ENCODE measurements at regions of chr4 and their contacts with region 1.

Region 1: GRCh38 chr4:102826890-102827673 is at the start of gene UBE2D3:
- DNase-seq: peak; percentile 99
- ATAC-seq: peak; percentile 48
- H3K4me3 ChIP-seq: peak within 1 kb of the TSS; percentile 96 to 100 (median 98)
- H3K4me3 Mint-ChIP-seq: no peak within 1 kb of the TSS
- H3K27ac ChIP-seq: peak within 1 kb of the TSS; percentile 100
- H3K27ac Mint-ChIP-seq: no peak within 1 kb of the TSS
- H3K4me1 ChIP-seq: peaks cover 33 to 34% of the 10 kb centered on the region in 2 donors
- H3K4me1 Mint-ChIP-seq: peaks cover 38% of the 10 kb centered on the region
- H3K27me3 ChIP-seq: no peaks in the 10 kb centered on the region
- H3K27me3 Mint-ChIP-seq: no peaks in the 10 kb centered on the region
- CTCF ChIP-seq: no peak
- total RNA-seq, gene UBE2D3: 261 and 264 TPM in 2 replicates

Region 2: DNA sequence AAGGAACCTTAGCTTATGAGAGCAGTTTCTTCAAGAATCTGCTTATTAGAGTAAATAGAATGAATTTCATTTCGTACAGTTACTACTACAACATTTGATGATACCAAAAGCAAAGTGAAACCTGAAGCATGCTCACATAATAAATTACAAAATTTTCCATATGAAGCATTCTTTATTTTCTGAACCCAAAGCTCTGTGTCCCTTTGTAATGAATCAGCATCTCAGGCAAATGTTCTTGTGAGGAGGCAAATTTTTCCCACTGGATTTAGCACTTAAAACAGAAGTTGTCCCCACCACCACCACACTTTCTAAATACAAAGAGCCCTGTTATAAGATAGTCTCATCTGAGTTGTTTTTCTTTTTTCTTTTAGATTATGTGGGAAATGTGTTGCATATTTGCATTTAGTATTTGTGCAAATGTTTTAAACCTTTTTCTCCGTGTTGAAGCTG is 396.6 kb before region 1 on chr4:
- CTCF ChIA-PET with region 1: interaction called, 4 read pairs
- POLR2A ChIA-PET with region 1: no interaction called
- intact Hi-C with region 1: loop called (anchors 1 kb)
- DNase-seq: no peak
- ATAC-seq: no peak
- H3K4me3 ChIP-seq: peak overlapping the region; percentile 48 to 79 (median 61)
- H3K4me3 Mint-ChIP-seq: peak overlapping the region; percentile 91
- H3K27ac ChIP-seq: peak overlapping the region in 1 of 2 donors; percentile 38
- H3K27ac Mint-ChIP-seq: peak overlapping the region; percentile 59
- H3K4me1 ChIP-seq: peaks cover 0 to 5% of the 10 kb centered on the region in 2 donors
- H3K4me1 Mint-ChIP-seq: peaks cover 5% of the 10 kb centered on the region
- H3K27me3 ChIP-seq: no peaks in the 10 kb centered on the region
- H3K27me3 Mint-ChIP-seq: no peaks in the 10 kb centered on the region
- CTCF ChIP-seq: no peak

Region 3: DNA sequence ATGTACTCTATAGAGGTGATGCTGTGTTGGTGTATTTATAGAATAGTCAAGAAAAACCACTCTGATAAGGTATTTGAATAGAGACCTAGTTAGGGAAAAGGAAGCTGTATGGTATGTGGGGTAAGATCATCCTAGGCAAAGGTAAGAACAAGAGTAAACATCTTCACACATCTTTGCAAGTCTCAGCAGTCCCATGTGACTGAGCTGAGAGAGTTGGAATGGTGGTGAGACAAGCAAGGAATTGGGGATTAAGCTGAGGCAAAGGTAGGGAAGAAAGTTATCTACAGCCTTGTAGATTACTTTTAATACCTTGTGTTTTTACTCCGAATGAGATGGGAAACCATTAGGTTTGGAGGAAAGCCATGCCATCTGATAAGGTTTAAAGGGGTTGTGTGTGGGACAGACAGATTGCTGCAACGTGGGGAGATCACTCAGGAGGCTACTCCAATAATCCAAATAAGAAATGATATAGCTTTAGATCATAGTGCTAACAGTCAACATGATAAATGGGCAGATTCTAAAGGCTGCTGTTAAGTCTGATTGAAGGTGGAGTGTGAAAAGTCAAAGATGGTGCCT is 34.6 kb before region 1 on chr4:
- CTCF ChIA-PET with region 1: no interaction called
- POLR2A ChIA-PET with region 1: interaction called, 3 read pairs
- intact Hi-C with region 1: loop called (anchors 5 kb)
- DNase-seq: no peak
- ATAC-seq: no peak
- H3K4me3 ChIP-seq: no peak overlapping the region
- H3K4me3 Mint-ChIP-seq: no peak overlapping the region
- H3K27ac ChIP-seq: no peak overlapping the region
- H3K27ac Mint-ChIP-seq: no peak overlapping the region
- H3K4me1 ChIP-seq: no peaks in the 10 kb centered on the region
- H3K4me1 Mint-ChIP-seq: peaks cover 7% of the 10 kb centered on the region
- H3K27me3 ChIP-seq: no peaks in the 10 kb centered on the region
- H3K27me3 Mint-ChIP-seq: no peaks in the 10 kb centered on the region
- CTCF ChIP-seq: no peak

Region 4: GRCh38 chr4:102868781-102869568 is 41.9 kb after region 1 on chr4 and contains the start of gene CISD2:
- CTCF ChIA-PET with region 1: interaction called, 20 read pairs
- POLR2A ChIA-PET with region 1: interaction called, 79 read pairs
- intact Hi-C with region 1: loop called (anchors 1 kb)
- DNase-seq: peak; percentile 95
- ATAC-seq: peak; percentile 87
- H3K4me3 ChIP-seq: peak within 1 kb of the TSS; percentile 75 to 89 (median 84)
- H3K4me3 Mint-ChIP-seq: peak within 1 kb of the TSS; percentile 93
- H3K27ac ChIP-seq: peak within 1 kb of the TSS; percentile 97
- H3K27ac Mint-ChIP-seq: peak within 1 kb of the TSS; percentile 97
- H3K4me1 ChIP-seq: peaks cover 22 to 23% of the 10 kb centered on the region in 2 donors
- H3K4me1 Mint-ChIP-seq: peaks cover 52% of the 10 kb centered on the region
- H3K27me3 ChIP-seq: no peaks in the 10 kb centered on the region
- H3K27me3 Mint-ChIP-seq: no peaks in the 10 kb centered on the region
- CTCF ChIP-seq: no peak
- total RNA-seq, gene CISD2: 15.1 and 16.0 TPM in 2 replicates

Region 5: GRCh38 chr4:103075901-103076739 is 249.0 kb after region 1 on chr4:
- CTCF ChIA-PET with region 1: interaction called, 3 read pairs
- POLR2A ChIA-PET with region 1: interaction called, 9 read pairs
- intact Hi-C with region 1: loop called (anchors 1 kb)
- DNase-seq: peak; percentile 78
- ATAC-seq: peak; percentile 55
- H3K4me3 ChIP-seq: peak overlapping the region; percentile 65 to 83 (median 80)
- H3K4me3 Mint-ChIP-seq: peak overlapping the region; percentile 82
- H3K27ac ChIP-seq: peak overlapping the region; percentile 92
- H3K27ac Mint-ChIP-seq: peak overlapping the region; percentile 89
- H3K4me1 ChIP-seq: peaks cover 27 to 31% of the 10 kb centered on the region in 2 donors
- H3K4me1 Mint-ChIP-seq: peaks cover 35% of the 10 kb centered on the region
- H3K27me3 ChIP-seq: no peaks in the 10 kb centered on the region
- H3K27me3 Mint-ChIP-seq: no peaks in the 10 kb centered on the region
- CTCF ChIP-seq: peak; percentile 12